Vagina (tissue), 2 donors: ENCODE measurements at regions of chr1 and their contacts with region 1.

Region 1: GRCh38 chr1:201113451-201114235 is 1.4 kb upstream of the CACNA1S start:
- DNase-seq: no peak
- H3K4me3 ChIP-seq: peak overlapping the region in 1 of 2 donors; percentile 76
- H3K27ac ChIP-seq: peak overlapping the region; percentile 17
- H3K4me1 ChIP-seq: peaks cover 8% of the 10 kb centered on the region
- H3K27me3 ChIP-seq: no peaks in the 10 kb centered on the region
- CTCF ChIP-seq: no peak
- POLR2A ChIP-seq: no peak

Region 2: GRCh38 chr1:200977071-200977754 is 136.4 kb before region 1 on chr1:
- intact Hi-C with region 1: loop called (anchors 2 kb)
- DNase-seq: no peak
- H3K4me3 ChIP-seq: no peak overlapping the region
- H3K27ac ChIP-seq: no peak overlapping the region
- H3K4me1 ChIP-seq: peaks cover 2% of the 10 kb centered on the region
- H3K27me3 ChIP-seq: no peaks in the 10 kb centered on the region
- CTCF ChIP-seq: no peak
- POLR2A ChIP-seq: no peak

Region 3: DNA sequence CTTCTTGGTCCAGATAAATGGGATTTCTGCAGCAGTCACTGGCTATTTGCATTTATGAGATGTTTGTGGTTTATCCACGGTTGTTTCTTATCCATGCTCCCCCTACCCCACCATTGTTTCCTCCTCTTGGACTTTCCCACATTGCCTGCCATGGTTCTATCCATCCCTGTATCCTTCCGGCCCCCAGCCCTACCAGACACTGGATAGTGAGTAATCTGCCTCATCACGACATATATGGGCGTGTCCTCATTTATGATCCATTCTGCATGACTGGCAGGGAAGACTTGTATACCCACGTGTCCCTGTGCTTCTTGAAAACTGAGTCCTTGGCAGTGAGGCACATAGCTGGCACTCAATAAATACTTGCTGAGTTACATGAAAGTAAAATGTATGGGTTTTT is 41.5 kb before region 1 on chr1:
- intact Hi-C with region 1: no loop called
- DNase-seq: no peak
- H3K4me3 ChIP-seq: no peak overlapping the region
- H3K27ac ChIP-seq: no peak overlapping the region
- H3K4me1 ChIP-seq: no peaks in the 10 kb centered on the region
- H3K27me3 ChIP-seq: no peaks in the 10 kb centered on the region
- CTCF ChIP-seq: no peak
- POLR2A ChIP-seq: no peak

Region 4: GRCh38 chr1:201309426-201309825 is 195.8 kb after region 1 on chr1:
- intact Hi-C with region 1: no loop called
- DNase-seq: no peak
- H3K4me3 ChIP-seq: no peak overlapping the region
- H3K27ac ChIP-seq: peak overlapping the region; percentile 93
- H3K4me1 ChIP-seq: peaks cover 74% of the 10 kb centered on the region
- H3K27me3 ChIP-seq: no peaks in the 10 kb centered on the region
- CTCF ChIP-seq: no peak
- POLR2A ChIP-seq: no peak